ENCODE measurements at regions of chr2 and their contacts with region 1.

Region 1: GRCh38 chr2:235230821-235231601 is 262.8 kb upstream of the AGAP1 start:
- DNase-seq: no peak
- H3K4me3 ChIP-seq: no peak overlapping the region
- H3K27ac ChIP-seq: no peak overlapping the region
- H3K27me3 ChIP-seq: peaks cover 0 to 14% (median 0%) of the 10 kb centered on the region in 45 donors
- CTCF ChIP-seq: no peak

Region 2: DNA sequence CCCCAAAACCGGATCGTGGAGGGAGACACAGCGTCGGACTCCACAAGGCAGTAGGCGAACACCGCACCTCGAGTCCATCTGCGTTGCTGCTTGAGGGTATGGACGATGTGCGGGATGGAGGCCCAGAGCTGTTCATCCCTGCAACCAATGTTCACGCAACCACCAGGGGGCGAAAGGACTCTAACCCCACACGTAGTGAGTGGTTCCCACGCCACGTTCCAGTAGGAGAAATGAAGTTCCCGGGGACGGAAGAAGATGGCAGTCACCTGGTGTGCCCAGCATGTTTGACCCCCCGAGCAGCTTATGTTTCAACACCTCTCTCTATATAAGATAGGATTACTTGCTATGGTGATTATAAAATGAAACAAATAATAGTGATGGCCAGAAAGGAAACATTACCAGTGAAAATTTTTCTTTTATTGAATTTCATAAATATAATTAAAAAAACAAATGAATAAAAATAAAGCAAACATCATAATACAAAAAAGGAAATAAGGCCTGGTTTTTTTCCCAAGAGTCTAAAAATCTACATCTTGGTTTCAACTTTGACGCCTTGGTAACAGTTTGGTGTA is 94.9 kb before region 1 on chr2:
- intact Hi-C with region 1: loop called (anchors 5 kb)
- DNase-seq: peak; percentile 56 to 88 (median 78)
- H3K4me3 ChIP-seq: peak overlapping the region in 1 of 59 donors; percentile 28
- H3K27ac ChIP-seq: no peak overlapping the region
- H3K27me3 ChIP-seq: peaks cover 0 to 3% (median 0%) of the 10 kb centered on the region in 45 donors
- CTCF ChIP-seq: peak; percentile 51 to 88 (median 75)

Region 3: DNA sequence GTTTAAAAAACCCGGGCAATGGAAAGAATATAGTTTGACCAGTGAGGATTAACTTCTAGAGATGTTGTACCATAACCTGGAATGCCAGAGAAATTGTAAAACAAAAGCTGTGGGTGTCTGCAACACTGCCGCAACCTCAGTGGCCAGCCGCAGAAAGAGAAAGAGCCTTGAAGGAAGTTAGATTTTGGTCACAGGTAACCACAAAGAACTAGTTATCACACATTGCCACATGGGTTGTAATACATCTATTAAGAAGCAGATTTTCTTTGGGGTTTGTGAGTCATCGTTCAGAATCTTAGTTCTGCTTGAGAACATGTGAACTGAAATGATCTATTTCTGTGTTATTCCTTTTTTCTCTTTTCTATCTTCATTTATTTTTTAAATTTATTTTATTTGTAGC is 39.9 kb after region 1 on chr2:
- intact Hi-C with region 1: no loop called
- DNase-seq: no peak
- H3K4me3 ChIP-seq: no peak overlapping the region
- H3K27ac ChIP-seq: no peak overlapping the region
- H3K27me3 ChIP-seq: peaks cover 0 to 3% (median 0%) of the 10 kb centered on the region in 45 donors
- CTCF ChIP-seq: no peak